OCI-LY7 (cell line): ENCODE measurements at regions of chr3 and their contacts with region 1.

Region 1: DNA sequence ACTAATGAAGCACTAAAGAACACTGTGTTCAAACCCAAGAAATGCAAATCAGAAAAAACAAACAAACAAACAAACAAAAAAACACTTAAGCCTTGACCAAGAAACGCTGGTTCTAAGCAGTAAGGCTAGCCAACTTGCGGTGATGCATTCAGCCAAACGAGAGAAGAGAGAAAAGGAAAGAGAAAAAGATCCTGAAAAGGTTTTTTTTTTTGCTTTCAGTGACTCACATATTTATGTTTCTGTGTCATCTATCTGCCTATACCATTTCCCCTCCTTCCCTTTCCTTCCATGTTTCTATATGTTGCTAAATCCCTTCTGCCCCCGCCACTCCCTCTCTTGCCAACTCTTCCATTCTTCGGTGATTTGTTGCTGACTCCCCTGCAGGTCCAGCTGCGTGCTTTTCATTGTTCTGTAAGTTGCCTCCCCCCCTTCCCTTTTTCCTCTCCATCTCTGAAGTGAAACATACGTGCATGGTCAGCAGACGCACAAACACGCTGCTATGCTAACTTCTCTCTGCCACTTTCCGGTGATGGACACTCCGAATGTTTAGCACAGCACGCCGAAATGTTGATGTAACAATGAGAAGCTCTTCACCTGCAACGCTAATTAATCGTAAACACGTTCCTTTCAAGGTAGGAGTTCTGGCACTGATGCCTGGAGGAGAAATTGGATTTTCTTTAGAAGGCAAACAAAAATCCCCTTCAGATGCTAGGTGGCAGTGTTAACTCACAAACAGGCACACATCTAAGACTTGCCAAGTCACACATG is 154.4 kb downstream of the TUSC7 start:
- DNase-seq: peak; percentile 50
- H3K4me3 ChIP-seq: no peak overlapping the region
- H3K27ac ChIP-seq: no peak overlapping the region
- H3K4me1 ChIP-seq: no peaks in the 10 kb centered on the region
- CTCF ChIP-seq: peak; percentile 75

Region 2: GRCh38 chr3:116785226-116785625 is 78.8 kb before region 1 on chr3:
- CTCF ChIA-PET with region 1: no interaction called
- POLR2A ChIA-PET with region 1: no interaction called
- intact Hi-C with region 1: no loop called
- DNase-seq: no peak
- H3K4me3 ChIP-seq: no peak overlapping the region
- H3K27ac ChIP-seq: no peak overlapping the region
- H3K4me1 ChIP-seq: no peaks in the 10 kb centered on the region
- CTCF ChIP-seq: no peak

Region 3: DNA sequence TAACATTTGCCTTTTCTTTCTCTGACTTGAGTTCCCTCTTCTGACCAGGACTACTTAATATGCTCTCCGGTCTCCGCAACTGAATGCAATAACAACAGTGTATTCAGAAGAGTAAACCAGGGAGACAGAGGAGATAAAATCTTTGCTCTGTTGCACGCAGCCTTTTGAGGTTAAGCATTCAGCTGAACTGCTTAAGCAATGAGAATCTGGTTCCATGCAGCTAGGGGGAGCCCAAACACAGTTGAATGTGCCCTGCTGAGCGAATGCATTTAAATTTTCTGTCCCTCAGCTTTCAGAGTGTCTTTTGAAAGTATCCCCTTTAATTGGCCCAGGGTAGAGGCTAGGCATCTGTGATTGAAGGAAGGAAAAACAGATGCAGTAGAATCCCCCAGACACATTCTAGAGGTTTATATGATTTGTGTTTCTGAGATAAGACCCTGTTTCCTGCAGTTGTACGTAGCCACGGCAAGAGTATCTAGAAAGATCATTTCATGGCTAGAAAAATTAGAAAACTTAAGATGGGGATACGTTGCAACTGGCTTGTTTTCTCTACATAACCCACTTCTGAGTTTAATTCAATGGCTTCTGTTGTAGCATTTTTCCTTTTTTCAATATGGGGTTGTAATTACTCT is 155.2 kb after region 1 on chr3:
- CTCF ChIA-PET with region 1: no interaction called
- POLR2A ChIA-PET with region 1: no interaction called
- intact Hi-C with region 1: loop called (anchors 10 kb)
- DNase-seq: peak; percentile 42
- H3K4me3 ChIP-seq: no peak overlapping the region
- H3K27ac ChIP-seq: no peak overlapping the region
- H3K4me1 ChIP-seq: no peaks in the 10 kb centered on the region
- CTCF ChIP-seq: peak; percentile 79